ENCODE measurements at regions of chr14 and their contacts with region 1.

Region 1: GRCh38 chr14:29548948-29549370 is 378.7 kb downstream of the PRKD1 start:
- DNase-seq: peak; percentile 5
- ATAC-seq: peak; percentile 84
- H3K4me3 ChIP-seq: no peak overlapping the region
- H3K27ac ChIP-seq: no peak overlapping the region
- H3K4me1 ChIP-seq: no peaks in the 10 kb centered on the region
- H3K27me3 ChIP-seq: no peaks in the 10 kb centered on the region
- CTCF ChIP-seq: peak; percentile 32 to 46 (median 35); a peak in 4 of 6 replicates
- EP300 ChIP-seq: no peak
- POLR2A ChIP-seq: no peak
- RAD21 ChIP-seq: peak; percentile 62

Region 2: DNA sequence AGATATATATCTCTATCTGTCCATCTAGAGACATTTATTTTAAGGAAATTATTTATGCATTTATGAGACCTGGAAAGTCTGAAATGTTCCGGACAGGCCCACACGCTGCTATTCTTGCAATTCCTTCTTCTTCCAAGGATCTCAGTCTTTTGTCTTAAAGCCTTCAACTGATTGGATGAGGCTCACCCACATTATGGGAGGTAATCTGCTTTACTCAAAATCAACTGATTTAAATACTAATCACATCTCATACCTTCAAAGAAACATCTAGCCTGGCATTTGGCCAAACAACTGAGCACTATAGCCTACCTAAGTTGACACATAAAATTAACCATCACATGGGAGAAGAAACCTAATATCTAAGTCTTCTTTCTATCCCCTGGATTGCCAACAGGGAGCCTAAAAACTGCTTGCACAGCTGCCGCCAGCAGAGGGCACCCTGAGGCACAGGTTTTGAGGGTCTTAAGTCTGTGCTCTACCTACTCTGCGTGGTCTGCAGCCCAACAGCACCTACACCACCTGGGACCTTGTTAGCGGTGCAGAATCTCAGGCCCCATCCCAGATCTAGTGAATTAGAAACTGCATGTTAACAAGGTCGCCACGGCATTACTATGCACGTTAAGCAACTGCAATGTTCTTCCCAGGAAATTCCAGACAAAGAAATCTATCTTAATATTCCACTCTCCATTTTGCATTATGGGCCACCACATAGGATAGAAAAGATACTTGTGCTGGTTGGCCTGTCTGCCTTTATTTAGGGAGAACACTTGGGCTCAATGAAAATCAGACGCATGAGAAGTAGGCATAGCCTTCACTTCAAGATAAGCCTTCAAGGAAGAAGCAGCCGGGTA is 532.7 kb before region 1 on chr14:
- CTCF ChIA-PET with region 1: no interaction called
- POLR2A ChIA-PET with region 1: no interaction called
- RAD21 ChIA-PET with region 1: no interaction called
- SMC1A ChIA-PET with region 1: no interaction called
- in situ Hi-C with region 1: no loop called
- intact Hi-C with region 1: loop called (anchors 10 kb)
- DNase-seq: no peak
- ATAC-seq: peak; percentile 69
- H3K4me3 ChIP-seq: no peak overlapping the region
- H3K27ac ChIP-seq: no peak overlapping the region
- H3K4me1 ChIP-seq: no peaks in the 10 kb centered on the region
- H3K27me3 ChIP-seq: no peaks in the 10 kb centered on the region
- CTCF ChIP-seq: peak; percentile 46 to 69 (median 53); a peak in 5 of 6 replicates
- EP300 ChIP-seq: no peak
- POLR2A ChIP-seq: no peak
- RAD21 ChIP-seq: peak; percentile 44

Region 3: DNA sequence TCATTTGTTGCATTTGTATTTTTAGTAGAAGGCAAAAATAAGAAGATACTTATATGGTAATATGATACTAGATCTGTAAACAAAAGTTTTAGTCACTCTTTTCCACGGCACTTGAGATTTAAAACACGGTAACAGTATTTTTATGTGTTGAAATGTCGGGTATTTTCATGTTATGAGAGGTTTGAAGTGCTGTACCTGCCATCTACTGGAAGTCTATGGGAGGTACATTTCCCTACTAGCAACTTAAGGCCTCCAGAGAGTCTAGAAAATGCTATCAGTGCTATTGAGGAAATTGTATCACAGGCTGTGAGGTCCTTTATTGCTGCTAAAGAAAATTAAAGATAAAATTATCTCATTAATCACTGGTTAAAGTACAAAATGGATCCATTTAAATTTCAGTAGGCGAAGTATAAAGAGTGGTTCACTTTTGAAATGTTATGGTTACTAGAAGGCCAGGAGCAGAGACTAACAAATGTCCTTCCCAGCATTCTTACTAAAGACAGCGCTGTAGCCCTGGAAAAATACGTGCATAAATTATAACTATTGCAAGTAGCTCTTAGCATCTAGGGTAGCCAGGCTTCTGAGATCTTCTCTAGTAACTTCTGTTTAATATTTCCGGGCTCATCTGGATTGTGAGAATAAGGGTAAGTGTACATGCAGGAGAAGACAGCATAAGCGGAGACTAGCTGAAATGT is 456.3 kb after region 1 on chr14:
- CTCF ChIA-PET with region 1: interaction called, 5 read pairs
- POLR2A ChIA-PET with region 1: no interaction called
- RAD21 ChIA-PET with region 1: interaction called, 3 read pairs
- SMC1A ChIA-PET with region 1: interaction called, 3 read pairs
- in situ Hi-C with region 1: loop called (anchors 10 kb)
- intact Hi-C with region 1: loop called (anchors 1 kb)
- DNase-seq: no peak
- ATAC-seq: peak; percentile 55
- H3K4me3 ChIP-seq: no peak overlapping the region
- H3K27ac ChIP-seq: no peak overlapping the region
- H3K4me1 ChIP-seq: no peaks in the 10 kb centered on the region
- H3K27me3 ChIP-seq: no peaks in the 10 kb centered on the region
- CTCF ChIP-seq: peak; percentile 41 to 48 (median 45); a peak in 5 of 6 replicates
- EP300 ChIP-seq: no peak
- POLR2A ChIP-seq: no peak
- RAD21 ChIP-seq: peak; percentile 66

Region 4: DNA sequence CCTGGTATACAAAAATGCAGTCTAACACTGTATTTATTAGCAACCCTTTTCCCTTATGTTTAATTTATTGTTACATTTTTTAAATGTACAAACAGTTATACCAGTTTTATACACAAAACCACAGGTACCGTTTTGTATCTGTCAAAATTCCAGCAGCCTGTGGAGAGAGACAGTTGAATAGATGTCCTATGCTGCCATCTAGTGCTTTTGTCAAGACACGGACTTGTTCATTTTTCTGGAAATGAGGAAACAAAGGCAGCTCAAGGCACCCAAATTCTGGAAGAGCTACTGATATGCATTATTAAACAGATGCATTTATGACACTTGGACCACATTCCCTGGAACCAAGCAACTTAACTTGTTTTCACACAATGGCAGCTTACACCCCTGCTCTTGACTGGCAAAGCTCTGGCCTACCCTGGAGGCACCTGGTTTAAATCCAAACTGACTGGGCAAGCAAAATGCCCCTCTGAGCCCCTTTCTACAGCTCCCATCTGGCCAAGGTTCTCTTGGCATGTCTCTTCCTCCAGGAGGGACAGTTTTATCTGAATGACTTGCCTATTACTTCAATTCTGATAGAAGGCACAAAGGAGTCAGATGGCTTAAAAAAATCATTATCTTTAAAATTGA is 665.6 kb after region 1 on chr14:
- CTCF ChIA-PET with region 1: interaction called, 10 read pairs
- POLR2A ChIA-PET with region 1: no interaction called
- RAD21 ChIA-PET with region 1: interaction called, 12 read pairs
- SMC1A ChIA-PET with region 1: interaction called, 5 read pairs
- in situ Hi-C with region 1: loop called (anchors 5 kb)
- intact Hi-C with region 1: loop called (anchors 1 kb)
- DNase-seq: peak; percentile 8
- ATAC-seq: peak; percentile 63; the same call in 2 of the 3 replicates
- H3K4me3 ChIP-seq: no peak overlapping the region
- H3K27ac ChIP-seq: no peak overlapping the region
- H3K4me1 ChIP-seq: no peaks in the 10 kb centered on the region
- H3K27me3 ChIP-seq: no peaks in the 10 kb centered on the region
- CTCF ChIP-seq: peak in 2 of 3 experiments; percentile 41 to 54; a peak in 3 of 6 replicates
- EP300 ChIP-seq: no peak
- POLR2A ChIP-seq: no peak
- RAD21 ChIP-seq: peak; percentile 75

Measured in GM12878 (cell line).